Activated naive CD8-positive, alpha-beta T cell treated with anti-CD3 and anti-CD28 coated beads, Interleukin-2, amount 10 ng/mL, durations not matched to agents 7 days and 5 days (primary cell): ENCODE measurements at regions of chr14 and their contacts with region 1.

Region 1: GRCh38 chr14:64914237-64914971 is at the start of gene CHURC1:
- DNase-seq: peak; percentile 87
- ATAC-seq: peak; percentile 93
- H3K4me3 Mint-ChIP-seq: peak within 1 kb of the TSS; percentile 95
- H3K27ac Mint-ChIP-seq: peak within 1 kb of the TSS; percentile 91
- H3K4me1 Mint-ChIP-seq: peaks cover 30% of the 10 kb centered on the region
- H3K27me3 Mint-ChIP-seq: peaks cover 12% of the 10 kb centered on the region
- total RNA-seq, gene CHURC1: 67.6 to 89.7 TPM

Region 2: DNA sequence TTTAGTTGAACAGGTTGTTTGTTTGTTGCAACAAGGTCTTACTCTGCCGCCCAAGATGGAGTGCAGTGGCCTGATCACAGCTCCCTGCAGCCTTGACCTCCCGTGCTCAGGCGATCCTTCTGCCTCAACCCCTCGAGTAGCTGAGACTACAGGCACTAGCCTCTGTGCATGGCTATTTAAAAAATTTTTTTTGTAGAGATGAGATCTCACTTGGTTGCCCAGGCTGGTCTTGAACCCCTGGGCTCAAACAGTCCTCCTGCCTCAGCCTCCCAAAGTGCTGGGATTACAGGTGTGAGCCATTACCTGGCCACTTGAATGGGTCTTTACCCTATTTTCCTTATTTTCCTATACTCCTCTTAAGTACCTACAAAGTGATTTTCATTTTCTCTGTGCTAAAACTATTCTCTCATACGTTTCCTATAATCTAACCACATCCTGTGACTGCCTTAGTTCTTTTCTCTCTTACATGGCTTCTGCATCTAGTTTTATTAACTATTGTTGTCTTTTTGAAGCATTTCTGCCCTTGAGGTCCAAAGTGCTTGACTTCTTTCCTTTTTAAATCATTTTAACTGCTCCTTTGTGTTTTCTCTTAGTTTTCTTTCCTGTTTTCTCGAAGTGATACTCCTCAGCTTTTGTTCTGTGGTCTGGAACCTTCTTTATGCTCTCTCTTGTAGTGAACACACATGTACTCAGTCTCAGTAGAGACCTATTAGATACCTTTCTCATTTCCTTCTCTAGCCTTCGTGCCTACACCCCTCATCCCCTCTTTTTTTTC is 14.0 kb after region 1 on chr14:
- POLR2A ChIA-PET with region 1: interaction called, 17 read pairs
- DNase-seq: no peak
- ATAC-seq: peak; percentile 79
- H3K4me3 Mint-ChIP-seq: no peak overlapping the region
- H3K27ac Mint-ChIP-seq: no peak overlapping the region
- H3K4me1 Mint-ChIP-seq: peaks cover 11% of the 10 kb centered on the region
- H3K27me3 Mint-ChIP-seq: no peaks in the 10 kb centered on the region